Common myeloid progenitor, CD34-positive (primary cell): ENCODE measurements at regions of chr5 and their contacts with region 1.

Region 1: GRCh38 chr5:167036585-167036984 is 1254.9 kb upstream of the WWC1 start:
- DNase-seq: no peak
- H3K4me3 ChIP-seq: no peak overlapping the region
- H3K27ac ChIP-seq: no peak overlapping the region
- H3K4me1 ChIP-seq: no peaks in the 10 kb centered on the region
- H3K27me3 ChIP-seq: no peaks in the 10 kb centered on the region

Region 2: DNA sequence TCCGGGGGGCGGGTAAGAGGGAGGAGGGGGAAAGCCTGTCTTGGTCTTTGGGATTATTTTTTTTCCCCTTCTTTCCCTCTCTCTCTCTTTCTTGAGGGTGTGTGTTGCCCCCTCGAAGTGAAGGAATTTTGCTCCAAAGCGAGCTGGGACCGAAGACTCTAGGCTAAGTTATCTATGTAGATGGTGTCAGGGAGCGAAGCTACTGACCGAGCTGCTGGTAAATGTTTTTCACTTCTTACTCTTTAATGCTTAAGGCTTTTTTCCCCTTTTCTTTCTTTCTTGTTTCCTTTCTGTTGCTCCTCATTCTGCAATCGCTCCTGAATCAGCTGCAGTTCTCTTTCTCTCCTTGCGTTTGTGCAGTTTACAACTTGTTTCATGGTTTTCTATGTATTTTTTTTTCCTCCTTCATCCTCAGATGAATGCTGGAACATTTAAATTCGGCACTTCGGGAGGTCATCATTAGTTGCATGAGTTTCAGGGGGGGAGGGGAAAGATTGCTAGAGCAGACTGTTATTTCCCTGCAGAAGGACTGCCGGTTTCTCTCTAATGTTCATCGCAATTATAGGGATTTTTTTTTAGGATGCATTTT is 57.2 kb before region 1 on chr5:
- CTCF ChIA-PET with region 1: no interaction called
- POLR2A ChIA-PET with region 1: no interaction called
- DNase-seq: peak in 1 of 3 donors; percentile 49
- H3K4me3 ChIP-seq: peak overlapping the region in 6 of 7 experiments; percentile 49 to 99 (median 87)
- H3K27ac ChIP-seq: peak overlapping the region; percentile 55 to 62
- H3K4me1 ChIP-seq: peaks cover 0 to 34% (median 12%) of the 10 kb centered on the region in 4 experiments
- H3K27me3 ChIP-seq: peaks cover 0 to 19% (median 0%) of the 10 kb centered on the region in 5 experiments

Region 3: GRCh38 chr5:167049043-167049663 is 12.6 kb after region 1 on chr5:
- CTCF ChIA-PET with region 1: interaction called, 14 read pairs
- POLR2A ChIA-PET with region 1: no interaction called
- DNase-seq: peak; percentile 59 to 79 (median 78)
- H3K4me3 ChIP-seq: no peak overlapping the region
- H3K27ac ChIP-seq: no peak overlapping the region
- H3K4me1 ChIP-seq: peaks cover 0 to 2% (median 0%) of the 10 kb centered on the region in 4 experiments
- H3K27me3 ChIP-seq: no peaks in the 10 kb centered on the region